Left ventricle myocardium superior (tissue), 1 donor: ENCODE measurements at regions of chr4 and their contacts with region 1.

Region 1: DNA sequence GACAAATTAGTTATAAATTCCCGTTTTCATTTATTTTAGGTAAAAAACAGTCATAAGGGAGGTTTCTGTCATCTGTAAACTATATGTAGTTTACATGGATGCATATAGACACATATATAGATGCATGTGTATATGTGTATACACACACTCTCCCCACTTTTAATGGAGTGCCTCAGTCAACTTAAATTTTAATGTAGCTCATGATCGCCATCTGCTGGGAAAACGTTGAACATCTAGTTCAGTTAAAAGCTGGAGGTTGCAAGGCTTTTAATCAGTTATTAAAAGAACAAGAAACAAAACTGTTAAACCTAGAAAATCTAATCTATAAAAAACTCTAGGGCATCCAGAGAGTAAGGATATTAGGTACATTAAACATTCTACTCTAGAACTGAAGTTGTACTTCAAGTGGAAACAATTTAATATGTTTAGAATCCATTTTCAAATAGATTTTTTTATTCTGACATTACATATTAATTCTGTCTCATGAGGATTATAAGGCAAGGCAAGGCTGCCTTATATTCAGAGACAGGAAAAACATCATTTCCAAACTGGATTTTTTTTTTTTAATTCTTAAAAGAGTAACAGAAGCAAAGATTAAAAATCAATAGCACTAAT is 122.6 kb downstream of the SHISA3 start:
- DNase-seq: no peak
- ATAC-seq: peak; percentile 41

Region 2: DNA sequence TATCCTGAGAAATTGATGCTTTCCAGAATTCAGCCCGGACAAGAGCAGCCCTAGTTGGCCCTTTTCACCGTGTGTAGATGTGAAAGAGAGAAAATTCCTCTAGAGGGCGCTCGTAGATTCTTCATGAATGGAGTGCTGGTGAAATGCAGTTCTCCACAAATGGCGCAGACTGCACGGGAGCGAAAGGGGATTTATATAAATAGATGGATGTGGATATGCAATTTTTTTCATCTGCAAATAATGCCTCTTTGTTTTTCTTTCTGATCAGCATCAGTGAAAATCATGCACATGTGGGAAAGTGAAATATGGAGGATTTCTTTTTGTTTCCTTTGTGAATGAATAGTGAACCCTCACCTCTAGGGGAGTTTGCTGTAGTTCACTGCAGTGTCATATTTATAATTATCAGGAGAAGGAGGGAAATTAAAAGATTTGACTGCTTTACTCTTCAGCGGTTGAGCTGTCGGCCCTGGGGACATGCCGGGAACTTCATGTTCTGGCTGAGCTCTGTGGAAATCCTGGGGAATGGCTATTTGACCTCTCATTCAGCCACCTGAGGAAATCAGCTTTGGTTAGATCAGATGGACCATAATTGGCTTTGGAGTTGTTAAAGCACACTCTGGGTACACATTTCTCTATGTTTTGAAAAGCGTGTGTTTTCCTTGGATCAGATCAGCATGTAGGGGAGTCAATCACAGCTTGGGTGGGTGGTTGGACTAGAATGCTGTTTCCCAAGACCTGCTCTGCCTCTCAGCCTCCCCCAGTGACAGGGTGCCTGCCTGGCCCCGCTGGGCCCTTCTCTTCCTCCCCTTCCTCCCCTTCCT is 237.6 kb before region 1 on chr4:
- intact Hi-C with region 1: loop called (anchors 5 kb)
- DNase-seq: peak; percentile 42
- ATAC-seq: peak; percentile 96

Region 3: GRCh38 chr4:42371306-42372252 is 148.3 kb before region 1 on chr4:
- intact Hi-C with region 1: loop called (anchors 5 kb)
- DNase-seq: no peak
- ATAC-seq: peak; percentile 69